Transverse colon (tissue), 4 donors: ENCODE measurements at regions of chr7 and their contacts with region 1.

Region 1: GRCh38 chr7:42262964-42263363 is 26.0 kb upstream of the GLI3 start:
- DNase-seq: peak; percentile 36
- H3K4me3 ChIP-seq: no peak overlapping the region
- H3K27ac ChIP-seq: peak overlapping the region in 3 of 4 donors; percentile 28 to 46 (median 31)
- H3K4me1 ChIP-seq: no peaks in the 10 kb centered on the region
- H3K27me3 ChIP-seq: no peaks in the 10 kb centered on the region
- CTCF ChIP-seq: no peak
- EP300 ChIP-seq: peak; percentile 77
- POLR2A ChIP-seq: no peak

Region 2: GRCh38 chr7:42227936-42228591 is 34.9 kb before region 1 on chr7:
- in situ Hi-C with region 1: no loop called
- intact Hi-C with region 1: loop called (anchors 1 kb)
- DNase-seq: peak; percentile 10
- H3K4me3 ChIP-seq: peak overlapping the region; percentile 2 to 35 (median 15)
- H3K27ac ChIP-seq: peak overlapping the region in 2 of 4 donors; percentile 15 to 40
- H3K4me1 ChIP-seq: peaks cover 0 to 23% (median 6%) of the 10 kb centered on the region in 4 donors
- H3K27me3 ChIP-seq: peaks cover 37% of the 10 kb centered on the region
- CTCF ChIP-seq: no peak
- EP300 ChIP-seq: no peak
- POLR2A ChIP-seq: no peak

Region 3: GRCh38 chr7:42292971-42293521 is 30.1 kb after region 1 on chr7:
- in situ Hi-C with region 1: no loop called
- intact Hi-C with region 1: no loop called
- DNase-seq: no peak
- H3K4me3 ChIP-seq: no peak overlapping the region
- H3K27ac ChIP-seq: no peak overlapping the region
- H3K4me1 ChIP-seq: no peaks in the 10 kb centered on the region
- H3K27me3 ChIP-seq: no peaks in the 10 kb centered on the region
- CTCF ChIP-seq: no peak
- EP300 ChIP-seq: no peak
- POLR2A ChIP-seq: no peak

Region 4: GRCh38 chr7:43164757-43165156 is 901.8 kb after region 1 on chr7:
- in situ Hi-C with region 1: no loop called
- intact Hi-C with region 1: no loop called
- DNase-seq: no peak
- H3K4me3 ChIP-seq: no peak overlapping the region
- H3K27ac ChIP-seq: no peak overlapping the region
- H3K4me1 ChIP-seq: no peaks in the 10 kb centered on the region
- H3K27me3 ChIP-seq: no peaks in the 10 kb centered on the region
- CTCF ChIP-seq: no peak
- EP300 ChIP-seq: no peak
- POLR2A ChIP-seq: no peak